B cell (primary cell): ENCODE measurements at regions of chr12 and their contacts with region 1.

Region 1: GRCh38 chr12:102948941-102949352 is 8.5 kb upstream of the ASCL1 start:
- DNase-seq: peak; percentile 72
- ATAC-seq: peak; percentile 57
- H3K4me3 ChIP-seq: no peak overlapping the region
- H3K4me3 Mint-ChIP-seq: no peak overlapping the region
- H3K27ac ChIP-seq: no peak overlapping the region
- H3K27ac Mint-ChIP-seq: no peak overlapping the region
- H3K4me1 ChIP-seq: peaks cover 10 to 13% of the 10 kb centered on the region in 2 donors
- H3K4me1 Mint-ChIP-seq: peaks cover 9% of the 10 kb centered on the region
- H3K27me3 ChIP-seq: peaks cover 0 to 41% (median 24%) of the 10 kb centered on the region in 4 experiments
- H3K27me3 Mint-ChIP-seq: peaks cover 57% of the 10 kb centered on the region
- CTCF ChIP-seq: peak; percentile 99

Region 2: GRCh38 chr12:102883204-102883799 is 65.6 kb before region 1 on chr12:
- CTCF ChIA-PET with region 1: interaction called, 49 read pairs
- POLR2A ChIA-PET with region 1: no interaction called
- intact Hi-C with region 1: loop called (anchors 2 kb)
- DNase-seq: peak; percentile 53
- ATAC-seq: peak; percentile 54
- H3K4me3 ChIP-seq: no peak overlapping the region
- H3K4me3 Mint-ChIP-seq: no peak overlapping the region
- H3K27ac ChIP-seq: no peak overlapping the region
- H3K27ac Mint-ChIP-seq: no peak overlapping the region
- H3K4me1 ChIP-seq: peaks cover 0 to 3% of the 10 kb centered on the region in 2 donors
- H3K4me1 Mint-ChIP-seq: peaks cover 4% of the 10 kb centered on the region
- H3K27me3 ChIP-seq: peaks cover 0 to 6% (median 2%) of the 10 kb centered on the region in 4 experiments
- H3K27me3 Mint-ChIP-seq: peaks cover 38% of the 10 kb centered on the region
- CTCF ChIP-seq: peak; percentile 88

Region 3: DNA sequence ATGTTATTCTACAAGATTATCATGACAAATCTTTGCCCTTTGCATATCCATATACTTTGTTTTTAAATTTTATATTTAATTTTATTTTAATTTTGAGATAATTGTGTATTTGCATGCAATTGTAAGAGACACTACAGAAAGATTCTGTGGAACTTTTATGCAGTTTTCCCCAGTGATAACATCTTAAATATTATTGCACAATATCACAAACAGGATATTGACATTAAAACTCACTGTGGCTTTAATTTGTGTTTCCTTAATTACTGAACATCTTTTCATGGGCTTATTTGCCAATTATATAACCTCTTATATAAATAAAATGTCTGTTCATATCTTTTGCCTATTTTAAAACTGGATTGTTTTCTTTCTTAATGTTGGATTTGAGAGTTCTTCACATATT is 104.1 kb after region 1 on chr12:
- CTCF ChIA-PET with region 1: no interaction called
- POLR2A ChIA-PET with region 1: no interaction called
- intact Hi-C with region 1: no loop called
- DNase-seq: no peak
- ATAC-seq: no peak
- H3K4me3 ChIP-seq: no peak overlapping the region
- H3K4me3 Mint-ChIP-seq: no peak overlapping the region
- H3K27ac ChIP-seq: no peak overlapping the region
- H3K27ac Mint-ChIP-seq: no peak overlapping the region
- H3K4me1 ChIP-seq: no peaks in the 10 kb centered on the region
- H3K4me1 Mint-ChIP-seq: no peaks in the 10 kb centered on the region
- H3K27me3 ChIP-seq: peaks cover 0 to 2% (median 0%) of the 10 kb centered on the region in 4 experiments
- H3K27me3 Mint-ChIP-seq: peaks cover 4% of the 10 kb centered on the region
- CTCF ChIP-seq: no peak

Region 4: GRCh38 chr12:103523771-103524170 is 574.8 kb after region 1 on chr12:
- CTCF ChIA-PET with region 1: interaction called, 12 read pairs
- POLR2A ChIA-PET with region 1: no interaction called
- intact Hi-C with region 1: no loop called
- DNase-seq: no peak
- ATAC-seq: no peak
- H3K4me3 ChIP-seq: no peak overlapping the region
- H3K4me3 Mint-ChIP-seq: no peak overlapping the region
- H3K27ac ChIP-seq: no peak overlapping the region
- H3K27ac Mint-ChIP-seq: no peak overlapping the region
- H3K4me1 ChIP-seq: peaks cover 1 to 2% of the 10 kb centered on the region in 2 donors
- H3K4me1 Mint-ChIP-seq: peaks cover 7% of the 10 kb centered on the region
- H3K27me3 ChIP-seq: peaks cover 0 to 3% (median 0%) of the 10 kb centered on the region in 4 experiments
- H3K27me3 Mint-ChIP-seq: peaks cover 3% of the 10 kb centered on the region
- CTCF ChIP-seq: no peak

Region 5: GRCh38 chr12:103538397-103538796 is 589.5 kb after region 1 on chr12:
- CTCF ChIA-PET with region 1: interaction called, 21 read pairs
- POLR2A ChIA-PET with region 1: no interaction called
- intact Hi-C with region 1: no loop called
- DNase-seq: no peak
- ATAC-seq: no peak
- H3K4me3 ChIP-seq: no peak overlapping the region
- H3K4me3 Mint-ChIP-seq: no peak overlapping the region
- H3K27ac ChIP-seq: no peak overlapping the region
- H3K27ac Mint-ChIP-seq: no peak overlapping the region
- H3K4me1 ChIP-seq: no peaks in the 10 kb centered on the region
- H3K4me1 Mint-ChIP-seq: no peaks in the 10 kb centered on the region
- H3K27me3 ChIP-seq: no peaks in the 10 kb centered on the region
- H3K27me3 Mint-ChIP-seq: no peaks in the 10 kb centered on the region
- CTCF ChIP-seq: no peak

Region 6: GRCh38 chr12:103560604-103561573 is 611.9 kb after region 1 on chr12:
- CTCF ChIA-PET with region 1: interaction called, 20 read pairs
- POLR2A ChIA-PET with region 1: no interaction called
- intact Hi-C with region 1: no loop called
- DNase-seq: no peak
- ATAC-seq: no peak
- H3K4me3 ChIP-seq: no peak overlapping the region
- H3K4me3 Mint-ChIP-seq: no peak overlapping the region
- H3K27ac ChIP-seq: no peak overlapping the region
- H3K27ac Mint-ChIP-seq: no peak overlapping the region
- H3K4me1 ChIP-seq: no peaks in the 10 kb centered on the region
- H3K4me1 Mint-ChIP-seq: no peaks in the 10 kb centered on the region
- H3K27me3 ChIP-seq: peaks cover 0 to 6% (median 0%) of the 10 kb centered on the region in 4 experiments
- H3K27me3 Mint-ChIP-seq: peaks cover 49% of the 10 kb centered on the region
- CTCF ChIP-seq: no peak